SK-N-SH (cell line): ENCODE measurements at regions of chr1 and their contacts with region 1.

Region 1: DNA sequence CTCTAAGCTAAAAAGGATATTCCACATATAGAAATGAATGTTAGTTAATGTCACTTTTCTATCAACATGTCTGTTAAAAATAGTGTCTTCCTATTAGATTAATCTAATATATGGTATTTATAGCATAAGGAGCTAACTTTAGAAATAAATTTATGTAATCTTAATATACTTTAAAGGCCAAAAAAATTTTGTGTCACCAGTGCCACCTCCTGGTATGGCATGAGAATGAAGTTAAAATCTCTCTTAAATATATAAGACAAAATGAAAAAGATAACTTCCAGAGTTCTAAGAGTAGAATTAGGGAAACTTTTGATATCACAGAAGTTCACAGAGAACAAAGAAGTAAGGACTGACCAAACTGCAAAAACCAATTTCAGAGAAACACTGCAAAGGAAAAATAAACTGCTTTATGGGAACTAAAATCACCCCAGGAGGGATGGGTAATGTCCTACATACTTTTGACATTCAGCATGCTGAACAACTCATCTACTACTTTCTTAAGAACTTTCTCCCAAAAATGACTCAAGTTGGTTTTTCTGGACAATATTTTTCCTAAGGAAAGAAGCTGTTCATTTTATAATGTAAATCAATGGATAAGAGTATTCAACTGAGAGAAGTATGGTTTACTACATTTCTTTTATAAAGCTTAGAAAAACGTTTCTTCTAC is 82.8 kb downstream of the TRIM33 start:
- DNase-seq: no peak
- H3K4me3 ChIP-seq: no peak overlapping the region
- H3K27ac ChIP-seq: no peak overlapping the region
- H3K4me1 ChIP-seq: peaks cover 0 to 9% of the 10 kb centered on the region in 2 experiments; a peak in 1 of 4 replicates
- H3K27me3 ChIP-seq: no peaks in the 10 kb centered on the region
- CTCF ChIP-seq: peak; percentile 74
- EP300 ChIP-seq: no peak
- RAD21 ChIP-seq: peak; percentile 30; the same call in 1 of the 2 replicates

Region 2: DNA sequence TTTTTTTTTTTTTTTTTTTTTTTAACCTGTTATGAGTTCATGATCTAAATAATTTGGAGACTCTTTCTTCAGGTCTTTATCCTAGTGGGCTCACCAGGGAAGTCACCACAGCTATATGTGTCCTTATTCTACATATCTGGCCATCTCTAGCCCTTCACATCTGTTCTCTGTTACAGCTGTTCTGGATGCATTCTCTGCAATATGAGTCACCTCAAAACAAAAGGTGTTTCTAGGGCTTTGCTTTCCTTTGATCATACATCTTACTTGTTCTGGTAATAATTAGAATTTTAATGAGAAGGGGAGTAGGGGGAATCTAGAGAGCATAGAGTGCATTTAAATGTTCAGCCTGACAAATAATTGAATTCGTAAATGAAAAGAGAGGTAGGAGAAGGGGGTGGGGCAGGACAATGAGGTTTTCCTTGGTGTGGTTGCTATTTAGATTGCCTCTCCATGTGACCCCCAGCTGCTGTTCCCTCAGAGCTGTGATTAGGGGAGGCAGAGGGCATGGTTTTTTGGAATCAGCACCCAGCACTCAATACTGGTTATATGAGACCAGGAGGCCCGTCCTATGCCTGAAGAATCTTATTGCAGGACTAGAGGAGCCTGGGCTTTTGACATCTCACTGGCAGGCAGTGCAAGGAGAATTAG is 282.6 kb before region 1 on chr1:
- CTCF ChIA-PET with region 1: no interaction called
- POLR2A ChIA-PET with region 1: no interaction called
- DNase-seq: no peak
- H3K4me3 ChIP-seq: no peak overlapping the region
- H3K27ac ChIP-seq: no peak overlapping the region
- H3K4me1 ChIP-seq: no peaks in the 10 kb centered on the region
- H3K27me3 ChIP-seq: peaks cover 29% of the 10 kb centered on the region
- CTCF ChIP-seq: no peak
- EP300 ChIP-seq: no peak
- RAD21 ChIP-seq: no peak

Region 3: GRCh38 chr1:114192329-114192728 is 235.9 kb before region 1 on chr1:
- CTCF ChIA-PET with region 1: no interaction called
- POLR2A ChIA-PET with region 1: no interaction called
- DNase-seq: no peak
- H3K4me3 ChIP-seq: no peak overlapping the region
- H3K27ac ChIP-seq: no peak overlapping the region
- H3K4me1 ChIP-seq: peaks cover 0 to 9% of the 10 kb centered on the region in 2 experiments; a peak in 1 of 4 replicates
- H3K27me3 ChIP-seq: no peaks in the 10 kb centered on the region; the same call in 1 of the 2 replicates
- CTCF ChIP-seq: no peak
- EP300 ChIP-seq: no peak
- RAD21 ChIP-seq: no peak

Region 4: DNA sequence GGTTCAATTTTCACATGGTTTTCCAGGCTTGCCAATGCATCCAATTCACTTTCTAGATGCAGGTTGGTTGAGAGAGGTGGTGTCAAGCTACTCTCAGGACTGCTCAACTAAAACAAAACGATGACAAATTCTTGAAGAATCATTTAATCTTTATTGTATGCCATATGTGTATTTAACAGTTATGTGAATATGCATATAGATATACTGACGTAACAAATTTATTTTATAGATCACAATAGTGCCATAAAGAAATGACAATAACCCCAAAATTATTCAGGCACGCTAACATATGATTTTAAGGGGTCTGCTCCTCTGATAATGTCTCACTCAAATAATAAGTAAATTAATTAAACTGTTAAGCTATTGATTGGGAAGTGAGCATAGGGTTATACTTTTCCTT is 22.6 kb before region 1 on chr1:
- CTCF ChIA-PET with region 1: interaction called, 10 read pairs
- POLR2A ChIA-PET with region 1: no interaction called
- DNase-seq: no peak
- H3K4me3 ChIP-seq: no peak overlapping the region
- H3K27ac ChIP-seq: no peak overlapping the region
- H3K4me1 ChIP-seq: no peaks in the 10 kb centered on the region
- H3K27me3 ChIP-seq: no peaks in the 10 kb centered on the region
- CTCF ChIP-seq: no peak
- EP300 ChIP-seq: no peak
- RAD21 ChIP-seq: no peak